ENCODE measurements at regions of chrX and their contacts with region 1.

Region 1: GRCh38 chrX:152941328-152942106 is 43.6 kb downstream of the ZNF185 start:
- DNase-seq: peak; percentile 87 to 92
- H3K4me3 ChIP-seq: peak overlapping the region; percentile 54
- H3K4me3 Mint-ChIP-seq: peak overlapping the region; percentile 86
- H3K27ac Mint-ChIP-seq: no peak overlapping the region
- H3K4me1 ChIP-seq: no peaks in the 10 kb centered on the region
- H3K4me1 Mint-ChIP-seq: no peaks in the 10 kb centered on the region
- H3K27me3 ChIP-seq: no peaks in the 10 kb centered on the region
- H3K27me3 Mint-ChIP-seq: no peaks in the 10 kb centered on the region
- CTCF ChIP-seq: peak; percentile 75 to 77

Region 2: DNA sequence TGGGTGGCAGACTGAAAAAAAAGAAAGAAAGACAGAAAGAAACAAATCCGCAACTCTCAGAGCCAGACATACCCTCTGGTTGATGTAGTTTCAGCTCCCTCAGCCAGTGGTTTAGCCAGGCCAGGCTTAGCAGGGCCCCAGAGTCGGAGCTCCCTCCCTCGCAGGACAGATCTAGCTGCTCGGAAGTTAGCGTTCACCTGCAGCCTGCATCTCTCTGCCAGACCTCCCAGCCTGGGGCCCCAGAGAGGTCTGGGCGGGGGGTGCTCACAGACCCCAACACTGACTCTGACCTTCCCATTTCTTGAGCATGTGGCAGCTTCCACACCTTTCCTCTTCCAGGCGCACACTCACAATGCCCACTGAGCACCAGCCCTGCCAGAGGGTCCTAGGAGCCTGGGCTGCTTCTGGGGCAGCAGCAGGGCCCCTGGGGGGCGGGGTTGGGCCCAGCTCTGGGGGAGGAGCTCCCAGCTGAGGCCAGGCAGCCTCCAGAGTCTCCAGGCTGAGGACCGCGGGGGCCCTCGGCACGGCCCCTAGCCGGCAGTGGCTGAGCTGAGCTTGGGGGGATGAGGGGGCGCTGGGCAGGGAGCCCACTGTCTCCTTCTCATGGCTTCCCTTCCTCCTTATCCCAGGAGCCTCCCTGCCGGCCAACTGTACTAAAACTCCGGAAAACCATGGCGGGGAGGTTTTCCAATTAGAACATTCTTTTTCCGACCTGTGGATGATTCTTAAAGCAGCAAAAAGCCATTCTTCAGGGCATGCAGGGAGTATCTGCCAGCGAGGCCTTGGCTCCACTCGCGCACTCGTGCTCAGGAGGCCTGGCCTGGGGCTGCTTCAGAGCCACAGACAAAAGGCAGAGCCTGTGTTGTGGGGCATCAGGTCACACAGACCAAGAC is 48.3 kb before region 1 on chrX:
- CTCF ChIA-PET with region 1: no interaction called
- POLR2A ChIA-PET with region 1: no interaction called
- intact Hi-C with region 1: no loop called
- DNase-seq: no peak
- H3K4me3 ChIP-seq: no peak overlapping the region
- H3K4me3 Mint-ChIP-seq: no peak overlapping the region
- H3K27ac Mint-ChIP-seq: no peak overlapping the region
- H3K4me1 ChIP-seq: peaks cover 9% of the 10 kb centered on the region
- H3K4me1 Mint-ChIP-seq: peaks cover 12% of the 10 kb centered on the region
- H3K27me3 ChIP-seq: no peaks in the 10 kb centered on the region
- H3K27me3 Mint-ChIP-seq: peaks cover 17% of the 10 kb centered on the region
- CTCF ChIP-seq: no peak

Region 3: GRCh38 chrX:152958524-152959465 is 17.3 kb after region 1 on chrX:
- CTCF ChIA-PET with region 1: interaction called, 4 read pairs
- POLR2A ChIA-PET with region 1: no interaction called
- intact Hi-C with region 1: loop called (anchors 1 kb)
- DNase-seq: peak; percentile 83 to 87
- H3K4me3 ChIP-seq: peak overlapping the region; percentile 45
- H3K4me3 Mint-ChIP-seq: peak overlapping the region; percentile 77
- H3K27ac Mint-ChIP-seq: peak overlapping the region; percentile 92
- H3K4me1 ChIP-seq: no peaks in the 10 kb centered on the region
- H3K4me1 Mint-ChIP-seq: no peaks in the 10 kb centered on the region
- H3K27me3 ChIP-seq: no peaks in the 10 kb centered on the region
- H3K27me3 Mint-ChIP-seq: no peaks in the 10 kb centered on the region
- CTCF ChIP-seq: peak; percentile 70 to 74

Region 4: GRCh38 chrX:153599192-153600031 is 657.9 kb after region 1 on chrX:
- CTCF ChIA-PET with region 1: no interaction called
- POLR2A ChIA-PET with region 1: no interaction called
- intact Hi-C with region 1: loop called (anchors 5 kb)
- DNase-seq: peak; percentile 88 to 91
- H3K4me3 ChIP-seq: peak overlapping the region; percentile 60
- H3K4me3 Mint-ChIP-seq: peak overlapping the region; percentile 80
- H3K27ac Mint-ChIP-seq: no peak overlapping the region
- H3K4me1 ChIP-seq: no peaks in the 10 kb centered on the region
- H3K4me1 Mint-ChIP-seq: peaks cover 6% of the 10 kb centered on the region
- H3K27me3 ChIP-seq: no peaks in the 10 kb centered on the region
- H3K27me3 Mint-ChIP-seq: no peaks in the 10 kb centered on the region
- CTCF ChIP-seq: no peak